H1 (cell line): ENCODE measurements at regions of chr3 and their contacts with region 1.

Region 1: GRCh38 chr3:148861277-148861869 is 3.7 kb upstream of the CPA3 start:
- DNase-seq: no peak
- H3K4me3 ChIP-seq: no peak overlapping the region
- H3K27ac ChIP-seq: no peak overlapping the region
- H3K4me1 ChIP-seq: no peaks in the 10 kb centered on the region
- H3K27me3 ChIP-seq: no peaks in the 10 kb centered on the region
- CTCF ChIP-seq: peak in 2 of 3 experiments; percentile 22 to 67; a peak in 2 of 4 replicates
- EP300 ChIP-seq: no peak
- POLR2A ChIP-seq: no peak
- RAD21 ChIP-seq: peak; percentile 71 to 72

Region 2: DNA sequence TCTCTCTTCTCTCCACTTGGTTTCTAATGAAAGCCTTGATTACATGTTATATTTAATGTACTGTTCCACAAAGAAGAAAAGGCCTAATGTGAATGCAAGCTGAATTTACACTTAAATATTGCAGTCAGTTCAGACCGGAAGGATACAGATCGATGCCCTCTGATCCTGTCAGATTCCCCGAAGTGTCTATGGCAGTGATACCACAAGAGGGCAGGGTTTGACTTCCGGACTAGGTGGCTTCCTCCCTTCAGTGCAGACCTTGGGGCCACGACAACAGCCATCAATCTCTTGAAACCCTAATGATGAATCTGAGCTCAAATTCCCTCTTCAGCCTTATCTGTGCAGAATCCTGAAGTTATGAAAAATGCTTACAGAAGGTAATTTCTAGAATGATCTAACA is 134.1 kb before region 1 on chr3:
- CTCF ChIA-PET with region 1: interaction called, 15 read pairs
- POLR2A ChIA-PET with region 1: no interaction called
- DNase-seq: peak in 1 of 2 experiments; percentile 53
- H3K4me3 ChIP-seq: no peak overlapping the region
- H3K27ac ChIP-seq: no peak overlapping the region
- H3K4me1 ChIP-seq: no peaks in the 10 kb centered on the region
- H3K27me3 ChIP-seq: no peaks in the 10 kb centered on the region
- CTCF ChIP-seq: peak; percentile 75 to 83 (median 82)
- EP300 ChIP-seq: no peak
- POLR2A ChIP-seq: no peak
- RAD21 ChIP-seq: peak; percentile 91 to 92

Region 3: GRCh38 chr3:148790851-148791735 is 70.3 kb before region 1 on chr3:
- CTCF ChIA-PET with region 1: no interaction called
- POLR2A ChIA-PET with region 1: no interaction called
- DNase-seq: no peak
- H3K4me3 ChIP-seq: no peak overlapping the region
- H3K27ac ChIP-seq: no peak overlapping the region
- H3K4me1 ChIP-seq: no peaks in the 10 kb centered on the region
- H3K27me3 ChIP-seq: no peaks in the 10 kb centered on the region
- CTCF ChIP-seq: no peak
- EP300 ChIP-seq: no peak
- POLR2A ChIP-seq: no peak
- RAD21 ChIP-seq: no peak

Region 4: DNA sequence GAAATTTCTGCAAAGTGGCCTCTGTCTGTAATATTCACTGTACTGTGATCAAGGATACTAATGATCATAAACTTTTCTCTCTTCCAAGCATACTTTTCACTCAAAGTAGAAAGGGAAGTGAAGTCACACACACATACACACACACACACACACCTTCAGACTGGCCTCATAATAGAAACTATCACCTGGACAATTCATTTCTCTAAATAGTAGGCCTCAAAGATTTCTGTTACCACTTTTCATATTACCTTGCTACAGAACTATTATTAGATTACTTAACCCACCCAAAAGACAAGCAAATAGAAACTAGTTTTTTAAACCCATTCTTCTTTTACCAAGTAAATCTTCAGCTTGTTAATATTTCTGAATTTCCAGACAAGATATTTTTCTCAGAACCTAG is 21.6 kb before region 1 on chr3:
- CTCF ChIA-PET with region 1: interaction called, 22 read pairs
- POLR2A ChIA-PET with region 1: no interaction called
- DNase-seq: no peak
- H3K4me3 ChIP-seq: no peak overlapping the region
- H3K27ac ChIP-seq: no peak overlapping the region
- H3K4me1 ChIP-seq: no peaks in the 10 kb centered on the region
- H3K27me3 ChIP-seq: no peaks in the 10 kb centered on the region
- CTCF ChIP-seq: no peak
- EP300 ChIP-seq: no peak
- POLR2A ChIP-seq: no peak
- RAD21 ChIP-seq: no peak

Region 5: GRCh38 chr3:148847351-148847750 is 14.0 kb before region 1 on chr3:
- CTCF ChIA-PET with region 1: interaction called, 23 read pairs
- POLR2A ChIA-PET with region 1: no interaction called
- DNase-seq: no peak
- H3K4me3 ChIP-seq: no peak overlapping the region
- H3K27ac ChIP-seq: no peak overlapping the region
- H3K4me1 ChIP-seq: no peaks in the 10 kb centered on the region
- H3K27me3 ChIP-seq: no peaks in the 10 kb centered on the region
- CTCF ChIP-seq: no peak
- EP300 ChIP-seq: no peak
- POLR2A ChIP-seq: no peak
- RAD21 ChIP-seq: no peak

Region 6: DNA sequence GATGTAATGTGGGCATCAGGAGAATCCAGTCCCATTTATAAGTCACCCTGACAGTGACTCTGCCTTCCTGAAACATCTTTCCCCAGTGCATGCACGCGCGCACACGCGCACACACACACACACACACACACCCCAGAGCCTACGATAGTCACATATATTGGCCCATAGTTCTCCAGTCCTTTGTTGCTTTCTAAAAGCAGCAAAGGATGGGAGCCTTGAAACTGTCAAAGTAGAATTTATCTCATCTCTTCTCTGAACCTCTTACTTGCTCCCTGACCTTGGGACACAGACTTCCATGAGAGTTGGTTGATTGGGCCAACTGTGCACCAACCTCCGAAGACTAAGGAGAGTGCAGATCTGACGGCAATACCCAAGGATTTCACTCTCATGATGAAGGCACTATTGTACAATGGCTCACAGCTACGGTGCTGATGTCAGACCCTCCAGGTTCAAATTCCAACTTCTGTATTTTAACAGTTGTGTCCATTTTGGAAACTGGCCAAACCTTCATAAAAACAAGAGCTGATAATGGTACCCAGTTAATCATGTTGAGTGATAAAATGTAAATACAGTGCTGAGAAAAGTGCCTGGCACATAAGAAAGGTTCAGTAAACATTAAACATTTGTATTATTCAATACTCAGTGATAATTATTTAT is 12.0 kb after region 1 on chr3:
- CTCF ChIA-PET with region 1: interaction called, 39 read pairs
- POLR2A ChIA-PET with region 1: no interaction called
- DNase-seq: no peak
- H3K4me3 ChIP-seq: no peak overlapping the region
- H3K27ac ChIP-seq: no peak overlapping the region
- H3K4me1 ChIP-seq: no peaks in the 10 kb centered on the region
- H3K27me3 ChIP-seq: no peaks in the 10 kb centered on the region
- CTCF ChIP-seq: no peak
- EP300 ChIP-seq: no peak
- POLR2A ChIP-seq: no peak
- RAD21 ChIP-seq: no peak

Region 7: GRCh38 chr3:148880681-148881080 is 19.3 kb after region 1 on chr3:
- CTCF ChIA-PET with region 1: interaction called, 39 read pairs
- POLR2A ChIA-PET with region 1: no interaction called
- DNase-seq: no peak
- H3K4me3 ChIP-seq: no peak overlapping the region
- H3K27ac ChIP-seq: no peak overlapping the region
- H3K4me1 ChIP-seq: no peaks in the 10 kb centered on the region
- H3K27me3 ChIP-seq: no peaks in the 10 kb centered on the region
- CTCF ChIP-seq: peak in 2 of 3 experiments; percentile 55 to 68; a peak in 3 of 4 replicates
- EP300 ChIP-seq: no peak
- POLR2A ChIP-seq: no peak
- RAD21 ChIP-seq: peak; percentile 83 to 85

Region 8: DNA sequence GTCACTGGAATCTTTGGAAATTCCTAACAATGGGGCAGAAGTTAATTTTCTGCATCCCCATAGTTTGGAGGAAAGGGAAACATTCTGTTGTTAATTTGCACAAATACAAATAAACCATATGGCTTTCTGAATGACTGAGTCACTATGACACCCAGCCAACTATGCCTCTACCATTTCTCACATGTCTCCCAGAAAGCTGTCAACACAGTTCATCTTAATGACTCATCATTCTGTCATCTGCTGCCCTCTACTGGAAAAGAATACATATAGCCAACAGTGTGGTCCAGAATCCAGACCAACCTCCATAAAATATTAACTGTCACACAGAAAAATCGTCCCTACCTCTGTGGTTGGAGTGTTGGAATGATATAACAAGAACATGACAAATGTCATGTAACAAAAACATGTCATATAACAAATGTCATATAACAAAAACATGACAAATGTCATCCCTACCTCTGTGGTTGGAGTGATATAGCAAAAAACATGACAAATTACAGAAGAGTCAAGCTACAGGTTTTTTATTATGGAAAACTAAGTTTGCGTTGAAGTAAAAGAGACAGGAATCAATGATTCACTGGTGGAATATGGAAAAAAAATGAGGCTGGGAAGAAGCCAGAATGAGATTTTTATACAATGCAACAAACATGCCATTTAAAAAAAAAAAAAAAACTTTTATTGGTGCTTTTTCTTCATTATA is 82.3 kb after region 1 on chr3:
- CTCF ChIA-PET with region 1: interaction called, 189 read pairs
- POLR2A ChIA-PET with region 1: no interaction called
- DNase-seq: no peak
- H3K4me3 ChIP-seq: no peak overlapping the region
- H3K27ac ChIP-seq: no peak overlapping the region
- H3K4me1 ChIP-seq: no peaks in the 10 kb centered on the region
- H3K27me3 ChIP-seq: no peaks in the 10 kb centered on the region
- CTCF ChIP-seq: peak in 2 of 3 experiments; percentile 57 to 59; a peak in 3 of 4 replicates
- EP300 ChIP-seq: no peak
- POLR2A ChIP-seq: no peak
- RAD21 ChIP-seq: peak; percentile 87 to 89

Region 9: GRCh38 chr3:149170672-149171071 is 309.3 kb after region 1 on chr3:
- CTCF ChIA-PET with region 1: no interaction called
- POLR2A ChIA-PET with region 1: no interaction called
- DNase-seq: no peak
- H3K4me3 ChIP-seq: no peak overlapping the region
- H3K27ac ChIP-seq: no peak overlapping the region
- H3K4me1 ChIP-seq: no peaks in the 10 kb centered on the region
- H3K27me3 ChIP-seq: no peaks in the 10 kb centered on the region
- CTCF ChIP-seq: no peak
- EP300 ChIP-seq: no peak
- POLR2A ChIP-seq: no peak
- RAD21 ChIP-seq: no peak